ENCODE measurements at regions of chr20 and their contacts with region 1.

Region 1: GRCh38 chr20:31951530-31952453 is at the start of gene PDRG1:
- DNase-seq: peak; percentile 97
- CTCF ChIP-seq: peak; percentile 91

Region 2: DNA sequence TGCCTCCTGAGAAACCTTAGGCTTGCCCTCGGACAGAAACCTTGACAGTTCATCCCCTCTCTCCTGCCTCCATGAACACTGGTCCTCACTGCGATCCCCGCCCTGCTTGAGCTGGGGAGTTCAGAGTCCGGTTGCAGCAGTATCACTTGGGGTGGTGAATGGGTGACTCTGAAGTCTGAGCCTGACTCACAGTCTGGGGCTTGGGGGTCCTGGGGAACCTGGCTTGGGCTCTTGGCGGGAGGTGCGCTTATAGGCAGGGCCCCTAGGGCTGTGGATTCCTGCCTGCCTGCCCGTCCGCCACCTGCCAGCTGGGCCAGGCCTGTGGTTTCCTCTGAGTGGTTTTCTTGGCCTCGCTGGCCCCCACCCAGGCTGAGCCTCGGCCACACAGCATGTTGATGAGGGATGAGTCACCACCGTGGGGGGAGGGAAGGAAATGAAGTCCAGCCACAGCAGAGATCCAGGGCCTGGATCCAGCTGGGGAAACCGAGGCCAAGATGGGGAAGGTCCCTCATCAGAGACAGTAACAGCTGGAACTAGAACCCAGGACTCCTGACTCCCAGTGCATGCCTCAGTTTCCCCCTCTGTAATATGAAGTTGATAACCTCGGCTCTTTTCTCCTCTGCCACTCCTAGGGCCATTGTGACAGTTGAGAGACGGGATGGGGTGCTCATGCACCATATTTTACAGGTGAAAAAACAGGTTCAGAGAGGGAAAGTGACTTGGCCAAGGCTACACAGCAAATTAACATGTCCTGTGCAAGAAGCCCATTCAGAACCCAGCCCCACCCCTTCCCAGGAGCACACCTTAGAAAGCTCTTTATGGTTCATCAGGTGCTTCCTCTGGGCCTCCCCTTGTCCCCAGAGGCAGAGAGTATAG is 115.6 kb before region 1 on chr20:
- CTCF ChIA-PET with region 1: interaction called, 16 read pairs
- POLR2A ChIA-PET with region 1: no interaction called
- DNase-seq: peak; percentile 71
- CTCF ChIP-seq: no peak

Region 3: GRCh38 chr20:31856516-31856915 is 95.3 kb before region 1 on chr20:
- CTCF ChIA-PET with region 1: interaction called, 200 read pairs
- POLR2A ChIA-PET with region 1: interaction called, 5 read pairs
- DNase-seq: no peak
- CTCF ChIP-seq: no peak

Region 4: GRCh38 chr20:31869942-31870725 is 81.7 kb before region 1 on chr20 and contains the starts of genes DUSP15 and TTLL9:
- CTCF ChIA-PET with region 1: interaction called, 18 read pairs
- POLR2A ChIA-PET with region 1: interaction called, 6 read pairs
- DNase-seq: no peak
- CTCF ChIP-seq: no peak

Region 5: GRCh38 chr20:31894980-31895675 is 56.7 kb before region 1 on chr20:
- CTCF ChIA-PET with region 1: interaction called, 16 read pairs
- POLR2A ChIA-PET with region 1: no interaction called
- DNase-seq: peak; percentile 84
- CTCF ChIP-seq: no peak

Region 6: GRCh38 chr20:31923388-31924331 is 28.1 kb before region 1 on chr20:
- CTCF ChIA-PET with region 1: interaction called, 21 read pairs
- POLR2A ChIA-PET with region 1: no interaction called
- DNase-seq: peak; percentile 77
- CTCF ChIP-seq: no peak

Region 7: DNA sequence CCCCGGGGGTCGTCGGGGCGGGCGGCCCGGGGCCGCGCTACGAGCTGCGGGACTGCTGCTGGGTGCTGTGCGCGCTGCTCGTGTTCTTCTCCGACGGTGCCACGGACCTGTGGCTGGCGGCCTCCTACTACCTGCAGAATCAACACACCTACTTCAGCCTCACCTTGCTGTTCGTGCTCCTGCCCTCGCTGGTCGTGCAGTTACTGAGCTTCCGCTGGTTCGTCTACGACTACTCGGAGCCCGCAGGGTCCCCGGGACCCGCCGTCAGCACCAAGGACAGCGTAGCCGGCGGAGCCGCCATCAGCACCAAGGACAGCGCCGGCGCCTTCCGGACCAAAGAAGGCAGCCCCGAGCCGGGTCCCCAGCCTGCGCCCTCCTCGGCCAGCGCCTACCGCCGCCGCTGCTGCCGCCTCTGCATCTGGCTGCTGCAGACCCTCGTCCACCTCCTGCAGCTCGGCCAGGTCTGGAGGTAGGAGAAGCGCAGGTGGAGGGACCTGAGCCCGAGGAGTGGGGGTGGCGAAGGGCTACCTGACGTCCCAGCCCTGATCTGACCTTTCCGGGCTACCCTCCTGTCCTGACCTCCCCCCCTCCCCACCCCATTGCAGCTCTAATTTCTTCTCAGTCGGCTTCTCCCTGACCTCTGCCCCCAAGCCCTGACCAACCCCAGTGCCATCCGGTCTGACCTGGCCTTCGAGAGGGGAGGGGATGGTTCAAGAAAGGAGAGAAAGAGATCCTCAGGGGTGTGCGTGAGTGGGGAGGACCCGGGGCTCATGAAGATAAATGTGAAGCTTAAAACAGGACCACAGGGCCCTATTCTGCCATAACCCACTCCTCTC is 16.7 kb after region 1 on chr20:
- CTCF ChIA-PET with region 1: interaction called, 20 read pairs
- POLR2A ChIA-PET with region 1: no interaction called
- DNase-seq: peak; percentile 93
- CTCF ChIP-seq: no peak

Measured in GM10248 (cell line).